Activated CD4-positive, alpha-beta memory T cell treated with anti-CD3 and anti-CD28 coated beads for 36 hours (primary cell): ENCODE measurements at regions of chr18 and their contacts with region 1.

Region 1: GRCh38 chr18:12271376-12272235 is 17.4 kb downstream of the CIDEA start:
- DNase-seq: peak; percentile 70
- H3K4me3 Mint-ChIP-seq: peak overlapping the region; percentile 59
- H3K27ac Mint-ChIP-seq: no peak overlapping the region
- H3K4me1 Mint-ChIP-seq: peaks cover 3% of the 10 kb centered on the region
- H3K27me3 Mint-ChIP-seq: peaks cover 5% of the 10 kb centered on the region

Region 2: DNA sequence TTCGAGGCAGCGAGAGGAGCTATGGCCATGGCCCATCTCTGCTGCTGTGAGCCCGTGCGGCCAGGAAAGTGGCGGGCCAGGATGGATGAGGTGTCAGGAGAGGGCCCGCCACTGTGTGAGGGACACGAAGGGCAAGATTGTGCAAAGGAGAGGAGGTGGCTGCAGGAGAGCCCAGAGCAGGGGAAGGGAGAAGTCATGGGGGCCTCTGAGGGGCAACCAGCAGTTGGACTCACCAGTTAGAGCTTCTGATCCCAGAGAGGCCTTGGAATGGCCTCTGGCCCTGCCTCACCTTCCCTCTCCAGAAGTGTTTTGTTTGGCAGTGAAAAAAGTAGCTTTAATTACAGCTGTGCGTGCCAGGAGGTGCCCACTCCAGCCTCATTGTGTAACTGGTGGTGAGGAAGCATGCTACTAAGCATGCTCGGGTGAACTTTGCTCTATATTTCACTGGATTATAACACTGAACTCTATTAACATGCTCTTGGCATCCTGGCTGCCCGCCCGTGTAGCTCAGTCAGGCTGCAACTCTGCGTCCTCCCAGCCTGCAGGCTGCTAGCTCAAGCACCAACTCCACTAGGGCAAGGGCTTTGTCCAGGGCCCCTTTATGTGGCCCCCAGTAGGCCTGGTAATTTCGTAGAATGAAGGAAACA is 256.1 kb before region 1 on chr18:
- CTCF ChIA-PET with region 1: no interaction called
- POLR2A ChIA-PET with region 1: no interaction called
- intact Hi-C with region 1: no loop called
- DNase-seq: no peak
- H3K4me3 Mint-ChIP-seq: no peak overlapping the region
- H3K27ac Mint-ChIP-seq: no peak overlapping the region
- H3K4me1 Mint-ChIP-seq: no peaks in the 10 kb centered on the region
- H3K27me3 Mint-ChIP-seq: no peaks in the 10 kb centered on the region

Region 3: DNA sequence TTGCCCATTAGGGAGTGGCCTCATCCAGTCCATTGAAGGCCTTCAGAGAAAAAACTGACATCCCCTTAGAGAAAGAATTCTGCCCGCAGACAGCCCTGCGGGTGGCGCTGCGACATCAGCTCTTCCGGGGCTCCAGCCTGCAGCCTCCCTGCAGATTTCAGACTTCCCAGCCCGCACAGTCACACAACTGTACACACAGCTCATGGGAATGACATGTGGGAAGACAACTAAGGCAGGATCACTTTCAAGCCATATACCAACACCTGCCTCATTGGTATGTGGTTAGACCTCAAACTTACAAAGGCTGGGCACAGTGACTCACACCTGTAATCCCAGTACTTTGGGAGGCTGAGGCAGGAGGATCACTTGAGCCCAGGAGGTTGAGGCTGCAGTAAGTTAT is 11.7 kb after region 1 on chr18:
- CTCF ChIA-PET with region 1: interaction called, 25 read pairs
- POLR2A ChIA-PET with region 1: no interaction called
- intact Hi-C with region 1: no loop called
- DNase-seq: no peak
- H3K4me3 Mint-ChIP-seq: no peak overlapping the region
- H3K27ac Mint-ChIP-seq: no peak overlapping the region
- H3K4me1 Mint-ChIP-seq: peaks cover 2% of the 10 kb centered on the region
- H3K27me3 Mint-ChIP-seq: peaks cover 24% of the 10 kb centered on the region